ENCODE measurements at regions of chr1 and their contacts with region 1.

Region 1: DNA sequence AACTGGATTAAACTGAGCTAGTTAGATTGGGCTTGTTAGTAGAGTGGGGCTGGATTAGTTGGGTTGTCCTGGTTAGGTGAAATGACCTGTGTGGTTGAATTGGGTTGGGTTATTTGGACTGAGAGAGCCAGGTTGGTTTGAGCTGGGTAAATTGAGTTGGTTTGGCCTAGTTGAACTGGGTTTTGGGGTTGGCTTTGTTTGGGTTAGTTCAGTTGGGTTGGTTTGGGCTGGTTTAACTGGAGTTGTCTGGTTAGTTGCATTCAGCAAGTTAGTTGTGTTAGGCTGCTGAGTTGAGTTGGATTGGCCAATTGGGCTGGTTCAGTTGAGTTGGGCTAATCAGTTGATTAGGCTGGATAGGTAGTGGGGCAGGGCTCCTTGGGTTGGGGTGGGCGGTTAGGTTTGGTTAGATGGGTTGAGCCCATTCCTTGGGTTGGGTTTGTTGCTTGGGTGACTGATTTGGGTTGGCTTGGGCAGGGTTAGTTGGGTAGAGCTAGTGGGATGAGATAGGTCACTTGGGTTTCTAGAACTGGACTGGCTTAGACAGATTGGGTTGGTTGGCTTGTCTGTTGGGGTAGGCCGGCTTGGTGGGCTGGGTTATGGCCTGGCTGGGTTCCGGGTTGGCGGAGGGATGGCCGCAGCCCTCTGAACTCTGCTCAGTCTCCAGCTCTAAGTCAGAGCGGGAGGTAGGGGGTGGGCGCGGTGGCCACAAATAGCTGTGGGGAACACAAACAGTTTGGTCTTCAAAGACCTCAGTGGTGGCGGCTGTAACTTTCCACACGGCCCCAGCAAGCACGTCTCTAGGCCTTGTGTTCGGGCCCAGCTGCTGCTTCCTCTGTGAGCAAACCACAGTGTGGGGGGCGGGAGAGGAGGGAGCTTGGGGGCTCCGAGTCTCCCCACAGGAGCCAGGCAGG is 67.2 kb upstream of the RUNX3 start:
- DNase-seq: peak; percentile 85
- ATAC-seq: peak; percentile 77
- H3K4me3 Mint-ChIP-seq: peak overlapping the region; percentile 73
- H3K27ac Mint-ChIP-seq: peak overlapping the region; percentile 98
- H3K4me1 Mint-ChIP-seq: peaks cover 85% of the 10 kb centered on the region
- H3K27me3 Mint-ChIP-seq: no peaks in the 10 kb centered on the region

Region 2: GRCh38 chr1:24970399-24970753 is 26.9 kb before region 1 on chr1:
- POLR2A ChIA-PET with region 1: interaction called, 266 read pairs
- DNase-seq: no peak
- ATAC-seq: no peak
- H3K4me3 Mint-ChIP-seq: peak overlapping the region; percentile 85
- H3K27ac Mint-ChIP-seq: peak overlapping the region; percentile 91
- H3K4me1 Mint-ChIP-seq: peaks cover 79% of the 10 kb centered on the region
- H3K27me3 Mint-ChIP-seq: no peaks in the 10 kb centered on the region

Region 3: DNA sequence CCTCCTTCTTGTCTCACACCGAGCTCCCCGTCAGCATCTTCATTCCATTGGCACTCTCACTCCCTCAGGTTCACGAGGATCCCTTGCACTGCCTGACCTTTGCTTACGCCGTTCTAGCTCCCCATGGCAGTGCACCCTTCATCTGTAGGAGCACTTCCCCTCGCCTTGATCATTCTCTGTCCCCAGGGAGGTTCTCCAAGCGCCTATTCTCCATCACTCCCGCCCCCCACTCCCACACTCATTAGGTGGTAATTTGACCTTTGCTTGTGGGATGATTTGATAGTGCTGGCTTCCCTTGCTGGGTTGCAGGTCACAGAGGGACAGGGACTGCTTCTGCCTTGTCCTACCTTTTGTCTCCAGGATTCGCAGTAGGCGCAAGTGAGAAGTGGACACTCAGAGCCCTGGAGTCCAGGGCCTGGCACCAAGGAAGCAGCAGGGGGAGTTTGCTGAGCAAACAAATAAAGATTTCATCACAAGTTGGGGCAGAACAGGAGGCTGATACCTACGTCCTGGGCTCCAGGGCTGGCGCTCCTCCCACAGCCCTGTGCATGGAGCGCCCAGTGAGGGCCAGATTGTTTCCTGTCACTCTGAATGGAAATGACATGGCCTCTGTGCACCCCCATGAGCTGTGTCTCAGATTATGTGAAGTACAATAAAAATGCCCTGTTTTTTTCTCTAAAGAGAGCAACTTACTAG is 14.9 kb after region 1 on chr1:
- POLR2A ChIA-PET with region 1: interaction called, 15 read pairs
- DNase-seq: no peak
- ATAC-seq: peak; percentile 59
- H3K4me3 Mint-ChIP-seq: no peak overlapping the region
- H3K27ac Mint-ChIP-seq: peak overlapping the region; percentile 69
- H3K4me1 Mint-ChIP-seq: peaks cover 45% of the 10 kb centered on the region
- H3K27me3 Mint-ChIP-seq: no peaks in the 10 kb centered on the region

Region 4: DNA sequence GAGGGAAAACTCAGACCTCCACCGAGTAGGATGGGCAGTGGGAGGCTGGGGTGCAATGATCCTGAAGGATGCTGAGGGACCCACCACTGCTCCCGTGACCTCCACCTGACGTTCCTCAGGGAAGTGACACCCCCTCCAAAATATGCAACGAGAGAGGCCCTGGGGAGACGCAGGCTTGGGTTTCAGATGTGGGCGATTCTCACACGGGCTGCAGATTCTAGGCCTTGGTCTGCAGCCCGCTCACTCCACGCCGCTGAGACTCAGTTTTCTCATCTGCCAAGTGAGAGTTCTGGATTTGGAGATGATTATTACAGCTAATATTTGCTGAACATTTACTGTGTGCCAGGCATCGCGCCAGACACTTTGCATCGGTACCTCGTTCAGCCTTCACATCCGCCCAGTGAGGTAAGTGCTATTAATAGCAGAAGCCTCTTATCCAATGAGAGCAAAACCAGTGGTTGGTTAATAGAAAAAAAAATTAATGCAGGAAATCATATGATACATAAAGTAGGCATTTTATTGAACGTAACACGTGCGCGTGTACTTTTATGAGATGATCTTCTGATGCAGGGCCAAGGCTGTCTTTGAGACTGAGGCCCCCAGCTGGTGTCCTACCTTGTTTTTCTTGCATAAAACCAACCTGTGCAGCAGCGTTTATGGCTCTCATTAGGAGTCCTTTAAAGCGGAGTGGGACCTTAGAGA is 34.9 kb after region 1 on chr1:
- POLR2A ChIA-PET with region 1: interaction called, 42 read pairs
- DNase-seq: peak; percentile 59
- ATAC-seq: peak; percentile 43
- H3K4me3 Mint-ChIP-seq: peak overlapping the region; percentile 88
- H3K27ac Mint-ChIP-seq: no peak overlapping the region
- H3K4me1 Mint-ChIP-seq: peaks cover 74% of the 10 kb centered on the region
- H3K27me3 Mint-ChIP-seq: no peaks in the 10 kb centered on the region